Transverse colon (tissue), 4 donors: ENCODE measurements at regions of chr6 and their contacts with region 1.

Region 1: GRCh38 chr6:88982720-88983119 is 19.3 kb upstream of the RNGTT start:
- DNase-seq: no peak
- H3K4me3 ChIP-seq: no peak overlapping the region
- H3K27ac ChIP-seq: no peak overlapping the region
- H3K4me1 ChIP-seq: peaks cover 0 to 7% (median 0%) of the 10 kb centered on the region in 4 donors
- H3K27me3 ChIP-seq: no peaks in the 10 kb centered on the region
- CTCF ChIP-seq: peak; percentile 63 to 76 (median 71)
- EP300 ChIP-seq: no peak
- POLR2A ChIP-seq: no peak

Region 2: GRCh38 chr6:89242574-89243330 is 260.0 kb after region 1 on chr6:
- in situ Hi-C with region 1: loop called (anchors 5 to 10 kb)
- intact Hi-C with region 1: loop called (anchors 5 kb)
- DNase-seq: peak; percentile 12
- H3K4me3 ChIP-seq: no peak overlapping the region
- H3K27ac ChIP-seq: no peak overlapping the region
- H3K4me1 ChIP-seq: no peaks in the 10 kb centered on the region
- H3K27me3 ChIP-seq: no peaks in the 10 kb centered on the region
- CTCF ChIP-seq: peak; percentile 45 to 68 (median 50)
- EP300 ChIP-seq: no peak
- POLR2A ChIP-seq: no peak

Region 3: DNA sequence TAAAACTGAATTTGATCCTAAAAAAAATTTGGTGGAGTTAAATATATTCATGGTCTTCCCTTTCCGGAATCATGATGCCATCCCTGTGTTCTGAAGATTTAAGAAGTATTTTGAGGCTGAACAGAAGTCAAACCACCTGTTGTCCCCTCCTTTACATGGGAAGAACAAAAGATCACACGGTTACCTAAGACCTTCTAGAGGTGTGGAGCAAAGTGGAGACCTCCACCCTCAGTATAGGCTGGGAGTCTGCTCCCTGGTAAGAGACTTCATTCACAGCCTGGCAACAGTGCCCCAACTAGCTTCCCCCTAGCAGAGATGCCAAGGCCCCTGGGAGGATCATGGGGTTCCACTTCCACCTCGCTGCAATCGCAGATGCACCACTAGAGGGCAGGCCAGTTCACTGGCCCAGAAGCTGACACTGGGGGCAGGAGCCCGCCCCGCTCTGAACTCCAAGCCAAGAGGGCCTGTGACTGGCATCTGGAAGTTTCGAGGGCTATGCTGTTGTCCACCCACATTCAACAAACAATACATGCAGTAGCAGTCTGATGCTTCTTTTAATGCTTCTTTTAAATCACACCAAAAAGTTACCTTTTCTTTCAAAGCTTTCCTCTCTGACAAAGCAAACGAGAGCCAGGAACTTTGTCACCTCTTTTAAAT is 389.3 kb after region 1 on chr6:
- in situ Hi-C with region 1: loop called in 2 of 4 experiments (anchors 25 kb)
- intact Hi-C with region 1: no loop called
- DNase-seq: peak; percentile 85
- H3K4me3 ChIP-seq: no peak overlapping the region
- H3K27ac ChIP-seq: peak overlapping the region; percentile 14 to 53 (median 21)
- H3K4me1 ChIP-seq: peaks cover 0 to 26% (median 12%) of the 10 kb centered on the region in 4 donors
- H3K27me3 ChIP-seq: no peaks in the 10 kb centered on the region
- CTCF ChIP-seq: peak; percentile 78 to 94 (median 91)
- EP300 ChIP-seq: no peak
- POLR2A ChIP-seq: no peak

Region 4: GRCh38 chr6:89610149-89610642 is 627.5 kb after region 1 on chr6:
- in situ Hi-C with region 1: loop called (anchors 25 kb)
- intact Hi-C with region 1: no loop called
- DNase-seq: peak; percentile 81
- H3K4me3 ChIP-seq: no peak overlapping the region
- H3K27ac ChIP-seq: no peak overlapping the region
- H3K4me1 ChIP-seq: no peaks in the 10 kb centered on the region
- H3K27me3 ChIP-seq: no peaks in the 10 kb centered on the region
- CTCF ChIP-seq: peak; percentile 73 to 85 (median 80)
- EP300 ChIP-seq: no peak
- POLR2A ChIP-seq: no peak